Panc1 (cell line): ENCODE measurements at regions of chr12 and their contacts with region 1.

Region 1: DNA sequence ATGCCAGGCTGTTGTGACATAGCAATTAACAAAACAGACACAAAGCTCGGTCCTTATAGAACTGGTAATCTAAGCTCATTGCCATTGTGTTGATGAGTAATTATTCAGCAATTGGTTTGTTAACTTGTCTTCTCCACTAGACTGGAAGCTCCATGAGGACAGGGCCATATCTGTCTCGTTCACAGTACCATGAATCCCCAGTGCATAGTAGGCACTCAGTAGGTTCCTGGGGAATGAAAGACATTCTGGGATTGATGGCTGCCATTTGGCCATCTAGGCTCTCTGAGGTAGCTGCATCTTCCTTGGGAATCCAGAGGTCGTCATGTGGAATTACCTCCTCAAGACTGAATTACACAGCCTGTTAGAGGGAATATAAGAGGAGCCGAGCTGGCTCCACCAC is 177.3 kb downstream of the CHST11 start:
- DNase-seq: no peak
- ATAC-seq: no peak
- H3K4me3 ChIP-seq: no peak overlapping the region
- H3K27ac ChIP-seq: no peak overlapping the region
- H3K4me1 ChIP-seq: no peaks in the 10 kb centered on the region
- H3K27me3 ChIP-seq: no peaks in the 10 kb centered on the region
- CTCF ChIP-seq: no peak

Region 2: GRCh38 chr12:104605685-104606084 is 28.4 kb before region 1 on chr12:
- CTCF ChIA-PET with region 1: interaction called, 10 read pairs
- POLR2A ChIA-PET with region 1: no interaction called
- in situ Hi-C with region 1: no loop called
- intact Hi-C with region 1: no loop called
- DNase-seq: no peak
- ATAC-seq: peak; percentile 71
- H3K4me3 ChIP-seq: peak overlapping the region; percentile 40 to 64
- H3K27ac ChIP-seq: peak overlapping the region; percentile 77
- H3K4me1 ChIP-seq: peaks cover 21% of the 10 kb centered on the region
- H3K27me3 ChIP-seq: no peaks in the 10 kb centered on the region; the same call in 1 of the 2 replicates
- CTCF ChIP-seq: no peak